ENCODE measurements at regions of chr6 and their contacts with region 1.

Region 1: DNA sequence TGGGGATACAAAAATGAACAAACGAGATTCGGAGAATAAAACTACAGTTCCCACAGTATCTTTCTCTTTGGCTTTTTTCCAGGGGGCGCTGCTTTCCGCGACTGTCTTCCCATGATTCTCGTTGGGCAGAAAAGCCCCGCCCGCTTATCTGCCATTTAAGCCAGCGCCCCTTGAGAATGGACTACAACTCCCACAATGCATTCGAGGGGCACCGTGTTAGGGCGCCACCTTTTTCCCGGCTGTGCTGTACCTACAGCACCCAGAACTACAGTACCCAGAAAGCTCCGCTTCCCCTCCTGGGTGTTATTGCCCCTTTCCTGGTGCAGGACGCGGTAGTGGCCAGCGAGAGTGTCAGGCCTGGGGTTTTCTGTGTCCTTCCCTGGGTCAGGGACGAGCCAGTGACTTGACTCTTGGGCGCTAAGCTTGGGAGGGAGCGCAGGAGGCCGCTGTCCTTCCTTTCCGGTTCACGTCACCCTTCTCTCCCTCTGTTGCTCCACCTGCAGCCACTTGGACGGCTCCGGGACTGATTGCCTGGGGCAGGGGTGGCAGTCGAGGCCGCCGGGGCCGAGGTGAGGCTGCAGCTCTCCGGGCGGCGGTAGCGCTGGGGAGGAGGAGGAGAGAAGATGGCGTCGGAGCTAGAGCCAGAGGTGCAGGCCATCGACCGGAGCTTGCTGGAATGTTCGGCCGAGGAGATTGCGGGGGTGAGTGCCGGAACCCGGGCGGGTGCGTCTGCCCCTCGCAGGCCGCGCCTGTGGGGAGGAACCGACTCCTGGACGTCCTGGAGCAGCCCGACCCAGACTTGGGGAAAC is at the start of gene UBR2:
- DNase-seq: peak; percentile 90 to 99
- ATAC-seq: peak; percentile 97 to 99 (median 98)
- H3K4me3 ChIP-seq: peak within 1 kb of the TSS; percentile 67 to 91 (median 84)
- H3K27ac ChIP-seq: peak within 1 kb of the TSS; percentile 86 to 98 (median 96)
- H3K4me1 ChIP-seq: peaks cover 0 to 38% (median 21%) of the 10 kb centered on the region in 9 donors
- H3K27me3 ChIP-seq: no peaks in the 10 kb centered on the region
- CTCF ChIP-seq: peak in 7 of 9 donors; percentile 10 to 65 (median 47)
- total RNA-seq, gene UBR2: 27.7 to 36.5 (median 34.5) TPM

Region 2: GRCh38 chr6:42017021-42017643 is 546.8 kb before region 1 on chr6:
- intact Hi-C with region 1: no loop called
- DNase-seq: no peak
- ATAC-seq: peak; percentile 17 to 71 (median 54)
- H3K4me3 ChIP-seq: no peak overlapping the region
- H3K27ac ChIP-seq: peak overlapping the region in 1 of 10 donors; percentile 1
- H3K4me1 ChIP-seq: peaks cover 6 to 30% (median 17%) of the 10 kb centered on the region in 9 donors
- H3K27me3 ChIP-seq: no peaks in the 10 kb centered on the region
- CTCF ChIP-seq: no peak

Region 3: DNA sequence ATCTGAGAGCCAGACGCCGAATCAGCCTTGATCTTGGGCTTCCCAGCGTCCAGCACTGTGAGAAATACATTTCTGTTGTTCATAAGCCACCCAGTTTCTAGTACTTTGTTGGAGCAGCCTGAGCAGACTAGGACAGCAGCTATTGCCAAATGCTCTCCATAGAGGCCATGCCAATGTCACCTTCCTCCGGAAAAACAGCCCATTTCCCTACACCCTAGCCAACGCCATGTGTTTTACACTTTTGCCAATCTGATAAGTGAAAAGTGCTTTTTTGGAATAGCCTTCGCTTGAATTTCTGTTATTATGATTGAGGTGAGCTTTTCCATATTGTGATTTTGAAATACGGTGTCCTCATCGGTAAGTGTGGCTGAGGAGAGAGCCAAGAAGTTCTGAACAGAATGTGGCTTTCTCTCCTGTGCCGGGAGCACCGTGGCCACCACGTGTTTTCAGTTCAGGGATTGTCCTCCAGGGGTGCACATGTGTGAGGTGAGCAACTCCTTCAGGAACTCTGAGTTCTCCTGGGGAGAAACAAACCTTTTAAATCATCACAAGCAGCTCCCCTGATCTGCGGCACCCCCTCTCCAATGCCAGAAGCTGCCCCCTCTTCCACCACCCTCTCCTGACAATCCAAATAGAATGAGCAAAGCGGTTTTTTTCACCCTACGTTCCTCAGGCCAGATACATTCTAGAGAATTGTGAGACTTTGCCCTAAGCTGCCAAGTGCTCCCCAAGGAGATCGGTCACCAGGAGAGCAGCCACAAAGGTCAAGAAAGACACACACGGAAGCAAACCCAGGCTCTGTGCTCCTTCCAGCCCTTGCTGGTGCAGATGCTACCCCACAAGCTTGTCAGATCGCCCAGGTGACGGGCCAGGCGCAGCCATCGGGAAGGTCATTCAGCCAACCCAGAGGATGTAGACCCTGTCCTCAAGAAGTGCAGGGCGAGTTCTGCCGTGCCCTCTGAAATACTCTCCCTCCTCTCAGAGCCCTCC is 477.6 kb before region 1 on chr6:
- intact Hi-C with region 1: loop called in 1 of 10 experiments (anchors 10 kb)
- DNase-seq: no peak
- ATAC-seq: peak; percentile 42 to 71 (median 58)
- H3K4me3 ChIP-seq: no peak overlapping the region
- H3K27ac ChIP-seq: peak overlapping the region; percentile 50 to 87 (median 78)
- H3K4me1 ChIP-seq: peaks cover 2 to 36% (median 19%) of the 10 kb centered on the region in 9 donors
- H3K27me3 ChIP-seq: no peaks in the 10 kb centered on the region
- CTCF ChIP-seq: peak in 6 of 9 donors; percentile 7 to 38 (median 24)

Region 4: GRCh38 chr6:42387336-42387735 is 176.6 kb before region 1 on chr6:
- intact Hi-C with region 1: no loop called
- DNase-seq: no peak
- ATAC-seq: no peak
- H3K4me3 ChIP-seq: no peak overlapping the region
- H3K27ac ChIP-seq: peak overlapping the region in 1 of 10 donors; percentile 85
- H3K4me1 ChIP-seq: peaks cover 0 to 57% (median 0%) of the 10 kb centered on the region in 9 donors
- H3K27me3 ChIP-seq: no peaks in the 10 kb centered on the region
- CTCF ChIP-seq: no peak

Region 5: DNA sequence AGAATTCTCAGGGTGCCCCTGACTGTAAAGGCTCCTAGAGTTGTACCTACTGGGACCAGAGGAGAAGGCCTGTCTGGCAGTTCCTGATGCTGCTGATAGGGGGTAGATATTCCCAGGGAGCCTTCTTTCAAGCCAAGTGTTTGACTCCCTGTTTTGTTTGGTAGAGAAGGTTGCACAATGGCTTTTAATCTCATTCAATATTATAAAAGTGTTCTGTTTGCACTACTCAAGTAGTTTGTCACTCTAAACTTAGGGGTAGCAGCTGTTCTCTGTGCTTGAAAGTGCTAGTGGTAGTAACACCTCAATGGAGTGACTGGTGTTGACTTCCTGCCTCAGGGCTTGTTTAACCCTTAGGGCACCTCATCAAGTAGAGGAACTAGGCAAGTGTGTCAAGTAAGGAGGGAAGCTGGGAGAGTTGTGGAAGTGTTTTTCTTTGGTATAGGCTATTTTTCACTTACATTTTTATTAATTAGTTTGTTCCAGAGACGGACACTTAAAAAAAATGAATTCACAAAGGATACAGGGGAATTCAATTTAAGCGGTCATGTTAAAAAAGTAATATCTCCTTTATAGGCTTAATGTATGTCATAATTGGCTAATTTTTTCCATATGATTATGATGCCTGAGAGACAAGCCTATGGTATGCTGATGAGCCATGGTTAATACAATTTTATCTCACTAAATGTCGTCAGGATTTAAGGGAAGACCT is 256.1 kb after region 1 on chr6:
- intact Hi-C with region 1: no loop called
- DNase-seq: no peak
- ATAC-seq: peak in 4 of 8 donors; percentile 13 to 56 (median 48)
- H3K4me3 ChIP-seq: no peak overlapping the region
- H3K27ac ChIP-seq: peak overlapping the region in 8 of 10 donors; percentile 28 to 77 (median 61)
- H3K4me1 ChIP-seq: peaks cover 0 to 37% (median 26%) of the 10 kb centered on the region in 9 donors
- H3K27me3 ChIP-seq: no peaks in the 10 kb centered on the region
- CTCF ChIP-seq: peak in 4 of 9 donors; percentile 4 to 25 (median 16)

Measured in heart right ventricle (tissue), 16 donors.